ENCODE measurements at regions of chr19 and their contacts with region 1.

Region 1: DNA sequence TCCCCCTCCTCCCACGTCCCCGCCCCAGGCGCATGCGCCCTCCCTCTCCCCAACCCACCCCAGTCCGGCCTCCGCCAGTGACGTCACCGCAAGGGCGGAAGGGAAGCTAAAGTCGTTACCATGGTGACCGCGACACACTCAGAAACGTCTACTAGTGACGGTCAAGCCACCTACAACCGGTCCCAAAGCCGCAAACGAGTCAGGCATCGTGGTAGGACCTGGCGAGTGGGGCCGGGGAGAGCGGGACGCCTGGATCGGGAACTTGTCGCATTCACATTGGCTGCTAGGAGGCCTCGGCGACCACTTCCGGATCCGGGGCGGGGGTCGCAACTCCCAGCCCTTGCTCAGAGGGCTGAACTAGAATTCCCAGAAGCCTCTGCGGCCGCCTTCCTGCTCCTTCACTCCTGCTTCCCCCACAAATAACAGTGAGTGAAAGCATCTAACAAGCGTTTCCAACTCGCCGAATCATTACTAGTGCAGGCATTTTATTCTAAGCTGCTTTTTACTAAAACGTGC is at the start of gene ZSCAN5A:
- DNase-seq: peak; percentile 96
- H3K4me3 ChIP-seq: peak within 1 kb of the TSS; percentile 57
- H3K27ac ChIP-seq: peak within 1 kb of the TSS; percentile 97
- H3K4me1 ChIP-seq: peaks cover 6% of the 10 kb centered on the region
- H3K27me3 ChIP-seq: no peaks in the 10 kb centered on the region
- CTCF ChIP-seq: no peak
- total RNA-seq, gene ZSCAN5A: 15.5 and 18.8 TPM in 2 replicates

Region 2: DNA sequence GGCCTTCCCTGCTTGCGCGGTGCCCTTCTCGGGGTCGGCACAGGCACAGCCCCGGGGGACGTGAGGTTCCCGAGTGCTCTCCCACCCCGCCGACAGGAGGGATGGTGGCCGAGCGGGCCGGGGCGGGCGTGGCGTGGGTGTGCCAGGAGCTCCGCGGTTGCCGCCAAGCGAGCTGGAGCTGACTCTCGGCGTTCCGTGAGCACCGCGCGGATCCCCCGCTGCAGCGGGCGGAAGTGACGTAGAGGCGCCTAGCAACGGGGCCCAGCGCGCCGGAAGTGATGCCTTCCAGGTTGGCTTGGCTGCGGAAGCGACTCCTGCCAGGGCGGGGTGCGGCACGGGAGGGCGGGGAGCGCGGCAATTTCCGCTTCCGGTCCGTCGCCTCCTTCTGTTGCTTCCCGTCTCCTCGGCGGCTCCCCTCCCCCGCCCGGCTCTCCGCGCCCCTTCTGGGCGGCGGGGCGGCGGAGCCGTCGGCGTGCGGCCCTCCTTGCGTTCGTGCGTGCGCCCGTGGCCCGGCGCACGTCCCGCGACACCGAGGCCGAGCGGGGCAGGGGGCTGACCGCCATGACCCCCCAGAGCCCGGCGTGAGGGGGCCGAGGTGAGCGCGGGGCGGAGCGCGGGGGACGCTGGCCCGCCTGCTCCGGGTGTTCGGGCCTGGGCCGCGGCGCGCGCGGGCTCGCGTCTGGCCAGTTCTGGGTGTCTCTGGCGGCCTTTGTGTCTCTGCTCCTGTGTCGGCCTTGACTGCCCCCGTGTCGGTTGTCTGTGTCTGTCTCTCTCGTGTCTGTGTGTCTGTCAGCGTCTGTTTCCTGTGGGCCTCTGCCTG is 639.6 kb before region 1 on chr19 and contains the start of gene EPN1:
- CTCF ChIA-PET with region 1: no interaction called
- POLR2A ChIA-PET with region 1: no interaction called
- intact Hi-C with region 1: loop called (anchors 10 kb)
- DNase-seq: peak; percentile 99
- H3K4me3 ChIP-seq: peak within 1 kb of the TSS; percentile 94
- H3K27ac ChIP-seq: peak within 1 kb of the TSS; percentile 92
- H3K4me1 ChIP-seq: peaks cover 51% of the 10 kb centered on the region
- H3K27me3 ChIP-seq: no peaks in the 10 kb centered on the region
- CTCF ChIP-seq: no peak
- total RNA-seq, gene EPN1: 178 and 186 TPM in 2 replicates

Region 3: DNA sequence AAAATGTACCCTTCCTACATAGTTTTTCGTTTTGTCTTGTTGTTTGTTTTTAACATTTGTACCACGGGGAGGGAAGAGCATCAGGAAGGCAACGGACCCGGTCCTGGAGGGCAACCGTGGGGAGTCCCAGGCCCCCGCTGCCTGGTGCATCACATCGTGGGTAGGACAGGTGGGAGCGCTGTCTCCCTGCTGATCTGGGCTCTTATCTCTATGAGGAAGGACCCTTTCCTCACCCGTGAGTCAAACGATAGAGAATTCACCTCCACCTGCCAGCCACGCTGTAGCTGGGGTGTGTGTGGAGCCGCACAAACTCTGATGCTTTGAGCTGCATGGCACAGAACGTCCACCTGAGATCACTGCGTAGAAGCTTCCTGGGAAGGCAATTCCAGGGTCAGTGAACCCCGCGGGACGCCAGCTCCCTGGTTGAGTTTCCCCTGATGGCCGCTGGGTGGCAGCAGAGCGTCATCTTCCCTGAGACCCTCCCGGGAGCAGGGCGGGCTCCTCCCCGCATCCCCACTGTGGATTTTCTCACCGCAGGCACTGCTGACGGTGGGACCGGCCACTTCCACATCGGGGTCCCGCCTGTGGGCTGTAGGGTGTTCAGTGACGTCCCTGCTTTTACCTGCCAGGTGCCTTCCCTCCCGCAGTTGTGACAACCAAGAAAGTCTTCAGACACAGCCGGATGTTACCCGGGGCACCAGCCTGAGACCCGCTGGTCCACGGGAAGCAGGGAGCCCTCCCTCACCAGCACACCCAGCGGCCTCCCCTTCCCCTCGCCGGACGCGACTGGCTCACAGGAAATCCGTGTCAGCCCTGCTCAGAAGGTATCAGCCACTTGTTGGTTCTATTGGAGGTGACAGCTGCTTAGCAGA is 248.2 kb before region 1 on chr19:
- CTCF ChIA-PET with region 1: no interaction called
- POLR2A ChIA-PET with region 1: no interaction called
- intact Hi-C with region 1: no loop called
- DNase-seq: peak; percentile 71
- H3K4me3 ChIP-seq: no peak overlapping the region
- H3K27ac ChIP-seq: no peak overlapping the region
- H3K4me1 ChIP-seq: no peaks in the 10 kb centered on the region
- H3K27me3 ChIP-seq: peaks cover 17% of the 10 kb centered on the region
- CTCF ChIP-seq: peak; percentile 91

Region 4: GRCh38 chr19:56105090-56105701 is 209.4 kb before region 1 on chr19:
- CTCF ChIA-PET with region 1: interaction called, 10 read pairs
- POLR2A ChIA-PET with region 1: no interaction called
- intact Hi-C with region 1: no loop called
- DNase-seq: peak; percentile 91
- H3K4me3 ChIP-seq: no peak overlapping the region
- H3K27ac ChIP-seq: peak overlapping the region; percentile 82
- H3K4me1 ChIP-seq: peaks cover 31% of the 10 kb centered on the region
- H3K27me3 ChIP-seq: no peaks in the 10 kb centered on the region
- CTCF ChIP-seq: peak; percentile 81

Region 5: DNA sequence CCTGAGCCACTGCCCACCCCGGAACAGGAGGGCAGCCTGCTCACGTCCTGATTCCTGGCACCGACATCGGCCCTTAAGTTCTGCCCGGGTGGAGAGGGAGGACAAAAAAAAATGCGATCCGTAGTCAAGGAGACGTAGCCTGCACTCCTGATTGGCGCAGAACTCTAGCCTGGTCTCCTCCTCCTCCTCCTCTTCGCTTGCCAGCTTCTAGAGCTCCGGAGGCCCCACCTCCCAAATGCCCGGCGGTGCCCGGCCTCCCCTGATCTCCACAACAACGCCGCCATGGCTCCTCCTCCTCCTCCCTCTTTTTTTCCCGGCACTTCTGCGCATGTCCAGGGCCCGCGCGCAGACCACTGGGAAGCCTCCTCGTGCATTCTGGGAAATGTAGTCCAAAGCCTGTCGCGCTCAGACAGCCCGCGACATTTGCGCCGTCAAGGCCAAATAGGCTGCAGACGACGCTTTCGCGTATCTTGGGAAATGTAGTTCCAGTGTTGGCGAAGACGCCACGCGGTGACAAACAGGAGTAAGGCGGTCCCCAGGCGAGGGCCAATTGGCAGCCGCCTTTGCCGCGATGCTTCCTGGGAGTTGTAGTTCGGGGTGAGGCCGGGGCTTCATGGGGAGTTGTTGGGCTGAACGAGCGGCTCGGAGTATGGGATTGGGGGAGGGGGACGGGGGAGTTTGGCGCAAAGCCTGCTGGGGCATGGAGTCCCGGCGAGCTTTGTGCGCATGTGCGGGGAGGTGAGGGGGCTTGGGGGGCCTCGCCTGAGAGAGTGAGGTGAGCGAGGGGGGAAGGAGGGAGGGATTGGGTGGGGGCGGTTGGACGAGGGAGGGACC is 173.8 kb before region 1 on chr19 and contains the start of gene ZNF444:
- CTCF ChIA-PET with region 1: interaction called, 11 read pairs
- POLR2A ChIA-PET with region 1: no interaction called
- intact Hi-C with region 1: no loop called
- DNase-seq: peak; percentile 99
- H3K4me3 ChIP-seq: peak within 1 kb of the TSS; percentile 53
- H3K27ac ChIP-seq: peak within 1 kb of the TSS; percentile 90
- H3K4me1 ChIP-seq: peaks cover 6% of the 10 kb centered on the region
- H3K27me3 ChIP-seq: no peaks in the 10 kb centered on the region
- CTCF ChIP-seq: no peak
- total RNA-seq, gene ZNF444: 44.2 and 45.3 TPM in 2 replicates